ENCODE measurements at regions of chr15 and their contacts with region 1.

Region 1: DNA sequence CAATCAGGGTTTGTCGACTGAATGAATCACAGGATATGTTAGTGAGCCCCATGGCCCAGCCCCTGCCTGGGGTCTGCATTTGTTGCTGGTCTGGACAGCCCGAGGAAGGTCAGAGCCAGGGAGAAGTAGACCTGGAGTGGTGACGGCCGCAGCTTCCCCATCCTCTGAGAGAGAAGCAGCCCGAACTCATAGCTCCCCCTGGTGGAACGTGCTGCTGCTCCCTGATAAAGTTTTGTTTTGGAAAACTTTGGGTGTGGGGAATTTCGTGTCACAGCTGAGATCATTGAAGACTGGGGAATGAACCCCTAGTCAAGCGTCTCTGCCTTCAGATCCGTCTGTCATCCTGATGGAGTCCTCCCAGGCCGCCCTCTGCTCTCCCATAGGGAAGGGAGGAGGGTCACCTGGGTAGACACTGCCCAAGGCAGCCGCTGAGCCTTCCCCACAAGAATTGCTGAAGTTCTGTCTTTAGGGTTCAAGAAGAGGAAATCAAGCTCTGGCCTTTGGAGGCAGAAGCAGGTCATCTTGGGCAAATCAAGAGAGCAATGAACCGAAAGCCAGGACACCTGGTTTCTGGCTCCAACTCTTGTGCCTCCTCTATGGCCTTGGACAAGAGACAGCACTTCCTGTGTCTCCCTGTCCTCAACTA is 60.5 kb downstream of the GLDN start:
- H3K4me3 Mint-ChIP-seq: no peak overlapping the region
- H3K27ac Mint-ChIP-seq: no peak overlapping the region
- H3K4me1 Mint-ChIP-seq: peaks cover 20% of the 10 kb centered on the region
- H3K27me3 Mint-ChIP-seq: peaks cover 35% of the 10 kb centered on the region

Region 2: DNA sequence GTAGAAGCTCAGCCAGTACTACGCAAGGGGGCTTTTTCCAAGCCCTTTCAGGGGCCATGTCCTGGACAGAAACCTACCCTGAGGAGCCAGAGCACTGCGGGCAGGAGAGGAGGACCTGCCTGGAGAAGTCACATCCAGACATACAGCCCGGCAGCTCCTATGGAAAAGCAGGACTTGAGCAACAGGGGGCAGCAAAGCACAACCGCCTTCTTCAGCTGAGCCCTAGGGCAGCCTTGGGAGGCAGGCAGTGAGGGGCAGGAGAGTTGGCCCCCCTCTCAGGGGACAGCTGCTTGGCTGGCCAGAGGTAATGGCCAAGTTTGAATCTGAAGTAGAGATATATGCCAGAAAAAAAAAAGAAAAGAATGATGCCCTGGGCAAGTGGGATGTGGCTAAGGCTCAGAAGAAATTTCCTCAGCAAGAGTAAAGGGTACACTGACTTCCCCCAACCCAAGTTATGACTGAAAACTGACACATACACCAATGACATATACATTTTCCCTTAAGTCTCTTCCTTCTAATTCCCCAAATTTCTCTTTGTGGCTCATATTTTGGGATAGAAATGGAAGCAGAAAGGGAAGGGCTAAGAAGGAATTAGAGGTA is 120.5 kb before region 1 on chr15:
- intact Hi-C with region 1: loop called (anchors 5 kb)
- H3K4me3 Mint-ChIP-seq: no peak overlapping the region
- H3K27ac Mint-ChIP-seq: no peak overlapping the region
- H3K4me1 Mint-ChIP-seq: peaks cover 10% of the 10 kb centered on the region
- H3K27me3 Mint-ChIP-seq: peaks cover 8% of the 10 kb centered on the region

Region 3: DNA sequence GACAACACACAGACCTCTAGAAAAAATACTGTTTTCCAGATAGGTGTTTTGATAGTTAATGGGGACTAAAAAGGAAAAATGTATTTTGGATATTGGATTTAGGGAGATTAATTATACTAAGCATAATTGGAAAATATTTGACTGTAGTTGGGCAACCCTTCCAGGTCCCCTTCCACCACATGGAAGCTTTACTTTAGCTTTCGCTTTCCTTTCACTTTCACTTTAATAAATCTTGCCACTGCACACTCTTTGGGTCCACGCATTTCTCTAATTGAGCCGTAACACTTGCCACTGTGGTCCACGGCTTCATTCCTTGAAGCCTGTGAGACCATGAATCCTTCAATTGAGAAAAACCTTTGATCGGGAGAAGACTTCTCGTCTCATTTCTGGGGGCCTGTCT is 45.0 kb before region 1 on chr15:
- intact Hi-C with region 1: no loop called
- H3K4me3 Mint-ChIP-seq: no peak overlapping the region
- H3K27ac Mint-ChIP-seq: no peak overlapping the region
- H3K4me1 Mint-ChIP-seq: peaks cover 11% of the 10 kb centered on the region
- H3K27me3 Mint-ChIP-seq: peaks cover 10% of the 10 kb centered on the region

Region 4: DNA sequence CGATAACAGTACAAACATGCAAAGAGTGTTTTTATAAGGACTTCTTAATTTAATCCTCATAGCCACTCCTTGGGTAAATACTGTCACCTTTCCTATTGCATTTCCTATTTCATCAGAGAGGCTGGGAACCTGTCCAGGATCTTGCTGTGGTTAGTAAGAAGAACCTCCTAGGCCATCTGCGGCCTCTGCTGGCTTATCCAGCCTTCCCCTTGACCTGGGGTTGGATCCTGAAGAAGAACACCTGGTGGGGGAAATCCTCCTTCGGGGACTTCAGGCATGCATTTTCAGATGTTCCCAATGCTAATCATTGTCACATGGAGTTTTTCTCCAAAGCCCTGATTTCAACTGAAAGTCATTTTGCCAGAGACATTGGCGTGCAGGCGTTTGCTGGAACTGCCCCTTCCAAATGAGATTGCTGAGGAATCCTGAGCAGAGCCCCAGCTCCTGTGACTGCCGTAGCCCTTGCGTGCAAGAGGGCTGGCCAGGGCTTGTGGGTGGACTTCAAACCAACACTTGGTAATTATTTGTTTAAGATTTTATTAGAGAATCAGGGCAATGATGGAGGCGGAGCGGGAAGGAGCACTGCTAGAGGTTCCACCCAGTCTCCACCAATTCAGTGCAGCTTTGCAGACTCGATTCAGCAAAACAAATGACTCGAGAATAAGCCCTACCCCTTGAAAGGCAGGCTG is 34.9 kb before region 1 on chr15:
- intact Hi-C with region 1: no loop called
- H3K4me3 Mint-ChIP-seq: no peak overlapping the region
- H3K27ac Mint-ChIP-seq: no peak overlapping the region
- H3K4me1 Mint-ChIP-seq: no peaks in the 10 kb centered on the region
- H3K27me3 Mint-ChIP-seq: peaks cover 6% of the 10 kb centered on the region

Region 5: GRCh38 chr15:51505251-51505650 is 103.3 kb after region 1 on chr15:
- intact Hi-C with region 1: no loop called
- H3K4me3 Mint-ChIP-seq: no peak overlapping the region
- H3K27ac Mint-ChIP-seq: no peak overlapping the region
- H3K4me1 Mint-ChIP-seq: peaks cover 10% of the 10 kb centered on the region
- H3K27me3 Mint-ChIP-seq: no peaks in the 10 kb centered on the region

Measured in dendritic cell treated with granulocyte-macrophage colony-stimulating factor and Interleukin-4, amounts not matched to agents 40 ng/mL and 50 ng/mL, for 4 days (primary cell).